A549 (cell line): ENCODE measurements at regions of chr1 and their contacts with region 1.

Region 1: DNA sequence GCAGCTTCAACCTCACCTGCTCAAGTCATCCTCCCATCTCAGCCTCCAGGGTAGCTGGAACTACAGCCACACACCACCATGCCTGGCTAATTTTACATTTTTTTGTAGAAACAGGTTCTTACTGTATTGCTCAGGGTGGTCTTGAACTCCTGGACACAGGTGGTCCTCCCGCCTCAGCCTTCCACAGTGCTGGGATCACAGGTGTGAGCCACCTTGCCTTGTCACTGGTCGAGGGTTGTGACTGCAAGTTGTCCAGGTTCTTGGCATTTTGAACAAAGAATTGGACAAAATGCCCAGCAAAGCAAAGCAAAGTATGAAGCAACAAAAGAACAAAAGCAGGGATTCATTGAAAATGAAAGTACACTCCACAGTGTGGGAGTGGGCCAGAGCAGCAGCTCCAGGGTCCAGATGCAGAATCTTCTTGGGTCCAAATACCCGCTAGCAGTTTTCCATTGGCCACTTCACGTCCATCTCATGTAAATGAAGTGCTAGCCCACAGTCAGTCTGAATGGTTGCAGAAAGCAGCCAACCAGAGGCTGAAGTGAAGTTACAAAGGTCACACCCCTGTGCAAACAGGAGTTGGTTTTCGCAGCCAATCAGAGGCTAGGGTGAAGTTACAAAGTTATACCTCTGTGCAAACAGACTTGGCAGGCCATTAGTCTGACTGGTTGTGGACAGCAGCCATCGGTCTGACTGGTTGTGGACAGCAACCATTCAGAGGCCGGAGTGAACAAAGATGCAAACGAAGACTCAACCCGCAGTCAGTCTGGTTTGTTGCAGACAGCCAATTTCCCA is 109.5 kb upstream of the KIF26B start:
- DNase-seq: peak in 1 of 2 experiments; percentile 85
- ATAC-seq: peak; percentile 81 to 93
- H3K4me3 ChIP-seq: no peak overlapping the region
- H3K27ac ChIP-seq: peak overlapping the region in 1 of 2 experiments; percentile 18; a peak in 2 of 6 replicates
- H3K4me1 ChIP-seq: peaks cover 22% of the 10 kb centered on the region
- CTCF ChIP-seq: no peak
- EP300 ChIP-seq: no peak
- POLR2A ChIP-seq: no peak
- RAD21 ChIP-seq: no peak

Region 2: DNA sequence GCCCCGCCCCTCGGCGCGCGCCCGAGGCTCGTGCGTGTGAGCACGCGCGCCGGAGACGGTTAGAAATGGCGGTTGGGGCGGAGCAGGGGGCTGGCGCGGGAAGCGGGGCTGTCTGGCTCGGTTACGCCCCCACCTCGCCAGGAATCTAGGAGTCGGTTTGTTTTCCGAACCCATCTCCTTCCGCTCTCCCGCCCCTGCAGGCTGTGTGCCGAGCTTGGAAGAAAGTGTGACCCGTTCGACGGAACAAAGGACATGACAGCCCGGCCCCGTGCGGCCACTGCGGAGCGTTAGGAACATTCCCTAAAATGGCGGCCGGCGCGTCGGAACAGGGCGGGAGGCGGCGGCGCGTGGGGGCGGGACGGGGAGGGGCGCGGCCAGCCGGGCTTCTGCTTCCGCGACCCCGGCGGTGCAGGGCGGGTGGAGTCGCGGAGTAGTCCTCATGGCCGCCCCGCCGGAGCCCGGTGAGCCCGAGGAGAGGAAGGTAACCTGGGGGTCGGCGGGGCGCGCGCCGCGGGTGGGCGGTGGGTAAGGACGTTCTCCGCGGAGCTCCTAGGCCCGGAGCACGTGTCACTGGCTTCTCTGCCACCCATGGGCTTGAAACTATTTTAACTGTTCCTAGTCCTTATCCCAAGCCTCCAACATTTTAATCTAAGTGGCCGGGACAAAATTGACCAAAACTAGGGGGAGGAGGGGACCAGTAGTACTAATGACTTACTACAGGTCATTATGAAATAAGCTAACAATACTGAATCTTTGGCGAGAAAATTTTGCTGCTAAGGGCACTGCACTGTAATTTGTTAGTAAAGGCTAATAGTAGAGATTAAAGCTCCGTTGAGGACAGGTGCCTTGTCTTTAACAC is 209.8 kb before region 1 on chr1 and contains the start of gene COX20:
- CTCF ChIA-PET with region 1: interaction called, 18 read pairs
- POLR2A ChIA-PET with region 1: interaction called, 12 read pairs
- DNase-seq: peak; percentile 66 to 95
- ATAC-seq: peak; percentile 72 to 78
- H3K4me3 ChIP-seq: peak within 1 kb of the TSS; percentile 69
- H3K27ac ChIP-seq: peak within 1 kb of the TSS; percentile 90 to 97
- H3K4me1 ChIP-seq: peaks cover 26% of the 10 kb centered on the region; the same call in 2 of the 3 replicates
- CTCF ChIP-seq: no peak
- EP300 ChIP-seq: no peak
- POLR2A ChIP-seq: peak; percentile 69
- RAD21 ChIP-seq: no peak
- polyA plus RNA-seq, gene COX20: 28.1 and 65.4 TPM in 2 replicates

Region 3: DNA sequence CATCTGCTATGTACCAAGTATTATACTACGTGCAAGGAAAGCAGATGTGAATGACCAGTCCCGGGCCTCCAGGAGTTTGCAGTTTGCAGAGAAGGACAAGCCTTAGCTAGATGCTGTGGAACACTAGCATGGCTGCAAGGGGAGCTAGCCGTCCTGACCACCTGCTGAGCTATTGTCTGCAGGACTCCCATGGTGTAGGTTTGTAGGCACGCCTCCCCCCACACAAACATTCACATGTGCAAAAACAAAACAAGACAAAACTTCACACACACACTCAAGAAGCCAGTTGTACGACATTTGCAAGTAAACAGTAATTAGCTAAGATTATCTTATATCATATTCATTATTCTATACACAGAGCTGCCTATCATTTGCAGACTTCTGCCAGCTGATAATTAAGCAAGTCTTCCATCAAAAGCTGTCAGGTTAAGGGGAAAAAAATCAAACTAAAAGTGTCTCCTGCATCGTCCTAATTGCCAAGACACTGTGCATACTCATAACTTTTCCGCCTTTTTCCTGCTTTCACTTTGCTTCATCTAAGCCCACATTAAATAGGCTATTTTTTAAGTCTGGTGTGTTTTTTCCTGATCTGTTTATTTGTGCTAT is 170.2 kb before region 1 on chr1:
- CTCF ChIA-PET with region 1: interaction called, 13 read pairs
- POLR2A ChIA-PET with region 1: no interaction called
- DNase-seq: no peak
- ATAC-seq: no peak
- H3K4me3 ChIP-seq: no peak overlapping the region
- H3K27ac ChIP-seq: no peak overlapping the region
- H3K4me1 ChIP-seq: no peaks in the 10 kb centered on the region
- CTCF ChIP-seq: no peak
- EP300 ChIP-seq: no peak
- POLR2A ChIP-seq: no peak
- RAD21 ChIP-seq: no peak

Region 4: GRCh38 chr1:245008761-245009160 is 36.5 kb before region 1 on chr1:
- CTCF ChIA-PET with region 1: interaction called, 13 read pairs
- POLR2A ChIA-PET with region 1: no interaction called
- DNase-seq: no peak
- ATAC-seq: no peak
- H3K4me3 ChIP-seq: no peak overlapping the region
- H3K27ac ChIP-seq: no peak overlapping the region
- H3K4me1 ChIP-seq: no peaks in the 10 kb centered on the region
- CTCF ChIP-seq: no peak
- EP300 ChIP-seq: no peak
- POLR2A ChIP-seq: no peak
- RAD21 ChIP-seq: no peak

Region 5: GRCh38 chr1:245031041-245031440 is 14.2 kb before region 1 on chr1:
- CTCF ChIA-PET with region 1: interaction called, 37 read pairs
- POLR2A ChIA-PET with region 1: no interaction called
- DNase-seq: no peak
- ATAC-seq: no peak
- H3K4me3 ChIP-seq: no peak overlapping the region
- H3K27ac ChIP-seq: no peak overlapping the region
- H3K4me1 ChIP-seq: no peaks in the 10 kb centered on the region
- CTCF ChIP-seq: no peak
- EP300 ChIP-seq: no peak
- POLR2A ChIP-seq: no peak
- RAD21 ChIP-seq: no peak

Region 6: DNA sequence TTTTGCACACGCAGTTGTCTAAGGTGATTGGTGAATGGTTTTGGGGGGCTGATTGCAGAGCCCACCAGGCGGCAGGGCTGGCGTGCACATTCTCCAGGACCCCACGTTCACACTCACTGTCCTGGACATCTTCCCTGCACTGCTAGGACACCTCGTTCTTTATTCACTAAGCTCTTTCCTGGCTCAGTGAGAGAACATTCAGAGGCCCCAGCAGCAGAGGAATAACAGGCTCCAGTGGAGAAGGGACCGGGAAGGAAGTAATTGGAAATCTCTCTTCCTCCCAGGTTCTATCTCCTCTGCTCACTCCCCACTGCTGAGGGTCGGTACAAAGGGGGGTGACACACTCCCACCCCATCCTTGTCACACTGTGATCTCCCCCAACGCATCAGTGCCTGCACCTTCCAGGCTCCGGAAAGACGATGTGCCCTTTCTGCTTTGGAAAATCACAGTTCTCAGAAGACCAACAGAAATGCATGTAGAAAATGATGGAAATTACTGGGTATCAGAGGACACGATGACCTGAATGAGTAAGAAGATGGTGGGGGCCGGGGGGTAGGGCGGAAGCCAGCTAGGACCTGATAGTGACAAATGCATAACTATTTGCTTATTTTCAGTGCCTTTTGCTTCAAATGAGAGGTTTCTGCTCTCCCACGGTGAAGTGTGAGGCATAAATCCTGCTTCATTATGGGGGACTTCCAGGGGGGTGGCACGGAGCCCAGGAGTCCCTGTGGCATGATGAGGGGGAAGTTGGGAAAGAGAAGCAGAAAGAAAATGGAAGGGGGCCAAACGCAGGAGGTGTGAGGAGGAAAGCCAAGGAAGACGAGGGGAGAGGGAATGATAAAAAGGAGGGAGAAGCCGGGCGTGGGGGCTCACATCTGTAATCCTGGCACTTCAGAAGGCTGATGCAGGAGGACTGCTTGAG is 84.3 kb after region 1 on chr1:
- CTCF ChIA-PET with region 1: no interaction called
- POLR2A ChIA-PET with region 1: no interaction called
- DNase-seq: no peak
- ATAC-seq: no peak
- H3K4me3 ChIP-seq: no peak overlapping the region
- H3K27ac ChIP-seq: no peak overlapping the region
- H3K4me1 ChIP-seq: no peaks in the 10 kb centered on the region
- CTCF ChIP-seq: no peak
- EP300 ChIP-seq: no peak
- POLR2A ChIP-seq: no peak
- RAD21 ChIP-seq: no peak